Ovary (tissue), 10 donors: ENCODE measurements at regions of chr1 and their contacts with region 1.

Region 1: DNA sequence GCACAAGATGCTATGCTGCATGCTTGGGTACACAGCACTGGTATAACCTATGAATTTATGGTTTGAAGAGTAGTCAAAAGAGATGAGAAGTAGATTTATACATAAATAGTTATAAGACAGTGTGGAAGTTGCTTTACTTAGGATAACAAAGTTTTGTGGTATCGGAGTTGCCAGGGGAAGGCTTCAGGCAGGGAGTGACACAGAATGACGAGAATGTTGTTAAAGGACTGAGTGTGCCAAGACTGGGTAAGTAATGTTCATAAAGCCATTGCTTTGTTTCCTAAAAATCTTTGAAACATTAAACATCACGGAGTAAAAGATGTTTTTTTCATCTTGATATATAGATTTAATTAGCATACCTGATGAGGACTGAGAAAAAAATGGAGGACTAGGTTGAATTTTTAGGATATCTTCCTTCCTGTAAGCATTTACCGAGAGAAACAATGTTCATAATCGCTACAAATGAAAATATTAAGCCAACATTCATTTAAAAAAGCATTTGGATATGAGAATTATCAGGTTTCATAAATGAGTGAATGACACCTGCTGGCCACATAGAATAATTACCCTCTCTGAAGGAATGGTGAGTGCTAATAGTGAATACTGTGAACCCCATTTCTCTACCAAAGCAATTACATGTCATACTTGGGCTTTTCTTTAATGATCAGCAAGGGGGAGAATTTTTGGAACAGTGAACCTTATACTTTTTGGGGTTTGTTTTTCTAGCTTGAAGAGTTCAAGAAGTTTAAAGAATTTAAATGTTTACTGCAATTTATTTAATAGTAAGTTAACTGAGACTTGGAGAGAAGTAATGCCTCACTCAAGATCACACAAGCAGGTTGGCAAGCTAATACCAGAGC is 28.4 kb downstream of the EXTL2 start:
- DNase-seq: no peak
- H3K4me3 ChIP-seq: no peak overlapping the region
- H3K27ac ChIP-seq: no peak overlapping the region
- H3K4me1 ChIP-seq: no peaks in the 10 kb centered on the region
- H3K27me3 ChIP-seq: no peaks in the 10 kb centered on the region
- CTCF ChIP-seq: peak in 2 of 3 donors; percentile 62 to 63
- EP300 ChIP-seq: no peak
- POLR2A ChIP-seq: no peak

Region 2: DNA sequence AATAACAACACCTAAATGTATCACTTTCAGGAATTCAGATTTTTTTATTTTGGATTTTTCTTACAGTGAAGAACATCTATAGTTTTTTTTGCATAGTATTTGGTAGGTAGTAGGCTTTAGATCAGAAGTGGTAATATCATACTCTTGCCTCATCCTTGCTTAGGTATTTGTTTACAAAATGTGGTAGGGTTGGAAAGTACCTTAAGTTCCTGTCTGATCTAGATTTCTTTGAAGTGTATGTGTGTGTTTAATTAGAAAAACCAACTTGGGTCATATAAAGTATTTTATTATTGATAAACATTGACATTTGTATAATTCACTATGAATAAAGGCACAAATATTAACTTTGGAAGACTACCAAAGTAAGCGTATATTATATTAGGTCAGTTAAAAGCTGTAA is 413.6 kb before region 1 on chr1:
- intact Hi-C with region 1: loop called in 1 of 4 experiments (anchors 5 kb)
- DNase-seq: no peak
- H3K4me3 ChIP-seq: no peak overlapping the region
- H3K27ac ChIP-seq: no peak overlapping the region
- H3K4me1 ChIP-seq: no peaks in the 10 kb centered on the region
- H3K27me3 ChIP-seq: no peaks in the 10 kb centered on the region
- CTCF ChIP-seq: no peak
- EP300 ChIP-seq: no peak
- POLR2A ChIP-seq: no peak

Region 3: GRCh38 chr1:101136739-101137138 is 270.5 kb after region 1 on chr1:
- intact Hi-C with region 1: no loop called
- DNase-seq: no peak
- H3K4me3 ChIP-seq: no peak overlapping the region
- H3K27ac ChIP-seq: no peak overlapping the region
- H3K4me1 ChIP-seq: no peaks in the 10 kb centered on the region
- H3K27me3 ChIP-seq: no peaks in the 10 kb centered on the region
- CTCF ChIP-seq: no peak
- EP300 ChIP-seq: no peak
- POLR2A ChIP-seq: no peak